K562 (cell line): ENCODE measurements at regions of chr1 and their contacts with region 1.

Region 1: DNA sequence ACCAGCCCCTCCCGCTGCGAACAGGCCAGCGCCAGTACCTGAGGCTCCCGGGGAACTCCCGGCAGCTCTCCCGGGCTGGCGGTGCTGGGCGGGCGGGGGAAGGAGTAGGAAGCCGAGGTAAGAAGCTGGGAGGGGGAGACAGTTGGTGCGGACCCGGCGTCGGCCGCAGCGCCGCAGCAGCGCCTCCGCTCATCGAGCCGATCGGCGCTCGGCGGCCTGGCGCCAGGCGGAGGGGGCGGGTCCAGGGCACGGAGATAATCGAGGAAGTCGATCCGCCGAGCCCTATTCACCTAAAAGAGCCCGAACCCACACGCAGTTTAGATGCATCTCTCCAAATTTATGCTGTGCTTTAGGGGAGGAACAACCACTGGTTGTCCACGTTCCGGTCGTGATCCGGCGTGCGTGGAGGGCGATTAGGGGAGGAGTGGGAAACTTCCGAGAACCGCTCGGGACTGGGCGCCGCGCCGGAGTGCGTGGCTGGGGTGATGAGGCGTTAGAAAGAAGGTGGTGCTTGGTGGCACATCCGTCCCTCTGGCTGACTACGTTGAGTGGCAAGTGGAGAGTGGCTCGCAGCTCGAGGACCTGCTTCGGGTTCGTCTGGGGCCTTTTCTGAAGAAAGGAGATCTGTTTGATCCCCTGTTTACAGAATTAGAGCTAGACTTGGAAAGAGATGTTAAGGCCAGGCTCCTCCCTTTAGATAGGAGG is at the start of gene VAMP4:
- DNase-seq: peak; percentile 91 to 94 (median 94)
- ATAC-seq: peak; percentile 88
- H3K4me3 ChIP-seq: peak within 1 kb of the TSS; percentile 92
- H3K27ac ChIP-seq: peak within 1 kb of the TSS; percentile 94
- H3K4me1 ChIP-seq: peaks cover 12 to 27% of the 10 kb centered on the region in 2 experiments; a peak in 4 of 5 replicates
- H3K27me3 ChIP-seq: no peaks in the 10 kb centered on the region
- CTCF ChIP-seq: peak in 1 of 3 experiments; percentile 14; a peak in 2 of 6 replicates
- EP300 ChIP-seq: peak; percentile 61; the same call in 1 of the 2 replicates
- POLR2A ChIP-seq: peak; percentile 95
- RAD21 ChIP-seq: no peak
- polyA plus RNA-seq, gene VAMP4: 3.3 to 4.1 TPM

Region 2: GRCh38 chr1:171644805-171645483 is 97.1 kb before region 1 on chr1:
- CTCF ChIA-PET with region 1: interaction called, 3 read pairs
- POLR2A ChIA-PET with region 1: interaction called, 3 read pairs
- in situ Hi-C with region 1: no loop called
- intact Hi-C with region 1: loop called (anchors 1 kb)
- DNase-seq: peak; percentile 69 to 91 (median 72)
- ATAC-seq: peak; percentile 97
- H3K4me3 ChIP-seq: no peak overlapping the region
- H3K27ac ChIP-seq: no peak overlapping the region
- H3K4me1 ChIP-seq: peaks cover 0 to 4% of the 10 kb centered on the region in 2 experiments; a peak in 2 of 5 replicates
- H3K27me3 ChIP-seq: peaks cover 4 to 23% of the 10 kb centered on the region in 2 experiments; a peak in 3 of 5 replicates
- CTCF ChIP-seq: peak; percentile 92 to 96 (median 95)
- EP300 ChIP-seq: no peak
- POLR2A ChIP-seq: no peak
- RAD21 ChIP-seq: peak; percentile 74 to 92

Region 3: GRCh38 chr1:171730052-171730451 is 12.0 kb before region 1 on chr1:
- CTCF ChIA-PET with region 1: no interaction called
- POLR2A ChIA-PET with region 1: interaction called, 31 read pairs
- in situ Hi-C with region 1: no loop called
- intact Hi-C with region 1: no loop called
- DNase-seq: no peak
- ATAC-seq: no peak
- H3K4me3 ChIP-seq: no peak overlapping the region
- H3K27ac ChIP-seq: no peak overlapping the region
- H3K4me1 ChIP-seq: no peaks in the 10 kb centered on the region
- H3K27me3 ChIP-seq: no peaks in the 10 kb centered on the region
- CTCF ChIP-seq: no peak
- EP300 ChIP-seq: no peak
- POLR2A ChIP-seq: no peak
- RAD21 ChIP-seq: no peak

Region 4: DNA sequence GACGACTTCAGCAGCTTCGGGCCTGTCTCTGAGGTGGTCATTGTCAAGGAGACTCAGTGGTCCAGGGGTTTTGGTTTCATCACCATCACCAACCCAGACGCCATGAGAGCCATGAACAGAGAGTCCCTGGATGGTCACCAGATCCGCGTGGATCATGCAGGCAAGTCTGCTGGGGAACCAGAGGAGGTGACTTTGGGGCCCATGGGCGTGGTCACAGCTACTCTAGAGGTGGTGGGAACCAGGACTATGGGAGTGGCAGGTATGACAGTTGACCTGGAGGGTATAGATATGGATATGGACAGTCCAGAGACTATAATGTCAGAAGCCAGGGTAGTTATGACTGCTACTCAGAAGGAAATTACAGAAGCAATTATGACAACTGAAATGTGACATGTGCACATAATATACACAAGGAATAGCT is 20.1 kb after region 1 on chr1:
- CTCF ChIA-PET with region 1: no interaction called
- POLR2A ChIA-PET with region 1: interaction called, 10 read pairs
- in situ Hi-C with region 1: no loop called
- intact Hi-C with region 1: loop called (anchors 2 kb)
- DNase-seq: peak; percentile 76 to 95 (median 82)
- ATAC-seq: peak; percentile 94
- H3K4me3 ChIP-seq: no peak overlapping the region
- H3K27ac ChIP-seq: peak overlapping the region; percentile 57
- H3K4me1 ChIP-seq: peaks cover 14 to 25% of the 10 kb centered on the region in 2 experiments; a peak in 4 of 5 replicates
- H3K27me3 ChIP-seq: no peaks in the 10 kb centered on the region
- CTCF ChIP-seq: no peak
- EP300 ChIP-seq: peak; percentile 89
- POLR2A ChIP-seq: peak; percentile 73
- RAD21 ChIP-seq: no peak